IMR-90 (cell line): ENCODE measurements at regions of chr7 and their contacts with region 1.

Region 1: DNA sequence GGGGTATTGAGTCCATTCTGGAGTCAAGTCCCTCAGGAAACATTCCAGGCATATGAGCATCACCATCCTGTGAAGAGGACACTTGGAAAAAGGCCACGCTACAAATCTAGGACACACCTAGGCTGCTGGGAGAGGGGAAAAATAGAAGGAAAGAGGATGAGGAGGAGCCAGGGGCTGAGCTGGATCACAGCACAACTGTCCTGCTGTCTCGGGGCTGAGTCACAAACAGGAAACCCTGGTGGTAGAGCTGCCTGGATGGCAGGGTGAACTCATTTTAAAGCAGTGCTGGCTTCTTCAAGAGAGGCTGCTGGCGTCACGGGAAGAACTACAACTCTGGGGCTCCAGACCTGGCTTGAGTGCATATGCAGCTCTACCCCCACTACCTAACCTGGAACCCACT is 151.5 kb downstream of the RNF216 start:
- DNase-seq: peak; percentile 74
- ATAC-seq: peak; percentile 39
- H3K4me3 ChIP-seq: no peak overlapping the region
- H3K27ac ChIP-seq: no peak overlapping the region
- H3K4me1 ChIP-seq: peaks cover 36% of the 10 kb centered on the region
- H3K27me3 ChIP-seq: no peaks in the 10 kb centered on the region
- CTCF ChIP-seq: no peak
- POLR2A ChIP-seq: no peak
- RAD21 ChIP-seq: no peak

Region 2: DNA sequence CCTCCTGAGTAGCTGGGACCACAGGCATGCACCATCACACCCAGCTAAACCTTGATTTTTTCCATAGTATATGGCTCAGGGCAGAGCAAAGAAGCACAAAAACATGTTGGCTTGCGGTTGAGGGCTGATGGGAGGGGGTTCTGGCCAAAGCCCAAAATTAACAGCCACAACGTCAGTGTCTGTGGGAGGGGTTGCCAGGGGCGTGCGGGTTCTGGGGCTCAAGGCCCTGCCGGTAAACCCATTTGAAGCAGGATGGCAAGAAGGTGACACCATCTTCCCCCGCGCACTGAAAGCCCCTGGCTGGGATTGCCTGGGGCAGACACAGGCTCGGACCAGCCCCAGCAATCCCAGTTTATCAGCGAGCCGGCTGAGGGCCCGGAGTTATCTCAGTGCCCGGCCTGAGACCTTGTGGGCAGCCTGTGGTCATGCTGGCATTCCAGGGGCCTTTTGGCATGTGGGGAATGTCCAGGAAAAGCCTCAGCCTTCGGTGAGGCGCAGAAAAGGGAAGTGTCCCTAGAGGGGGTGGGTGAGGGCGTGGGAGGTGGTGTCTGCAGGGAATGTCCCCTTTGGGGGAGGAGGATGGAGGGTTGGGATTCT is 38.6 kb before region 1 on chr7:
- CTCF ChIA-PET with region 1: no interaction called
- POLR2A ChIA-PET with region 1: no interaction called
- dilution Hi-C with region 1: no loop called
- in situ Hi-C with region 1: no loop called
- intact Hi-C with region 1: no loop called
- DNase-seq: peak; percentile 80
- ATAC-seq: peak; percentile 36
- H3K4me3 ChIP-seq: no peak overlapping the region
- H3K27ac ChIP-seq: peak overlapping the region; percentile 48
- H3K4me1 ChIP-seq: peaks cover 12% of the 10 kb centered on the region
- H3K27me3 ChIP-seq: peaks cover 5% of the 10 kb centered on the region; the same call in 1 of the 2 replicates
- CTCF ChIP-seq: 0 out of 2 replicates have a peak, but pooled peaks have one; percentile 1
- POLR2A ChIP-seq: no peak
- RAD21 ChIP-seq: no peak

Region 3: GRCh38 chr7:5704534-5704922 is 74.6 kb after region 1 on chr7:
- CTCF ChIA-PET with region 1: interaction called, 3 read pairs
- POLR2A ChIA-PET with region 1: no interaction called
- dilution Hi-C with region 1: no loop called
- in situ Hi-C with region 1: no loop called
- intact Hi-C with region 1: loop called (anchors 1 kb)
- DNase-seq: peak; percentile 84
- ATAC-seq: peak; percentile 81
- H3K4me3 ChIP-seq: no peak overlapping the region
- H3K27ac ChIP-seq: no peak overlapping the region
- H3K4me1 ChIP-seq: peaks cover 20% of the 10 kb centered on the region
- H3K27me3 ChIP-seq: no peaks in the 10 kb centered on the region
- CTCF ChIP-seq: peak; percentile 93
- POLR2A ChIP-seq: no peak
- RAD21 ChIP-seq: peak; percentile 91